CD8-positive, alpha-beta T cell (primary cell): ENCODE measurements at regions of chr22 and their contacts with region 1.

Region 1: DNA sequence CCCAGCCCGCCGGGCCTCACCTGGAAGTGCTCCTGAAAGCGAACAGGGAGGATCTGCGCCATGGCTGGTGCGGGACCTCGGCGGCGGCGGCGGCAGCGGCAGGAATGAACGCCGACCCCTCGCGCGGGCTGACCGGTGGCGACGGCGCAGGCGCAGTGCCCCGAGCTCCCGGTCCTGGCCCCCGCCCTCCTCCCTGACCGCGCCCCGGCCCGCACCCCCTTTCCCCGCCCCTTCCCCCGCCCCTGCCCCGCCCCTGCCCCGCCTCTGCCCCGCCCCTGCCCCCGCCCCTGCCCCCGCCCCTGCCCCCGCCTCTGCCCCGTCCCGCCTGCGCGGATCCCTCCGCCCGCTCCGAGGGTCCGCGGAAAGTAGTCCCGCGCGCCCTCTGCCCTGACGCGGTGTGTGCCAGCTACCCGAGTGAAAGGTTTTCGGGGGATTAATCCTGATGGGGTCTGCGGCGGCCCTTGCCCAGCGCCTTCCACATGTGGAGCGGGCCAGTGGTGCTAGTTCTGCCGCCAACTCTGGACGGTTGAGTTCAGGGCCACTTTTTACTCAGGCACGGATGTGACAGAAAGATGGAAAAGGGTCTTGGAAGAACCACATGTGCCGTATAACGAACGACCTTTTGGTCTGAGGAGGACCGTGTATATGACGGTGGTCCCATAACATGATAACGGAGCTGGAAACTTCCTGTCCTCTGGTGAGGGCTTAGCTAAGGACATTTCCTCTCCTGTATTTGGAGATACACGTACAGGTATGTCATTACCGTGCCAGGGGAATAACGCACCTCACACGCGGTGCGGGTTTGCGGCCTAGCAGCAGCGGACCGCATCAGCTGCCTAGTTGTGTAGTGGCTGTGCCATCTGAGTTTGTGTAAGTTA is at the start of gene CLTCL1:
- DNase-seq: peak; percentile 40 to 83 (median 67)
- ATAC-seq: peak; percentile 81
- H3K4me3 ChIP-seq: peak within 1 kb of the TSS; percentile 82 to 92
- H3K4me3 Mint-ChIP-seq: peak within 1 kb of the TSS; percentile 93
- H3K27ac ChIP-seq: peak within 1 kb of the TSS; percentile 38 to 55
- H3K27ac Mint-ChIP-seq: peak within 1 kb of the TSS; percentile 23
- H3K4me1 ChIP-seq: peaks cover 18% of the 10 kb centered on the region
- H3K4me1 Mint-ChIP-seq: peaks cover 24% of the 10 kb centered on the region
- H3K27me3 ChIP-seq: no peaks in the 10 kb centered on the region
- H3K27me3 Mint-ChIP-seq: peaks cover 21% of the 10 kb centered on the region
- CTCF ChIP-seq: no peak
- total RNA-seq, gene CLTCL1: 0.43 to 0.69 TPM

Region 2: GRCh38 chr22:19178656-19179496 is 112.9 kb before region 1 on chr22 and contains the start of gene SLC25A1:
- CTCF ChIA-PET with region 1: no interaction called
- POLR2A ChIA-PET with region 1: no interaction called
- intact Hi-C with region 1: loop called (anchors 1 kb)
- DNase-seq: peak in 8 of 9 experiments; percentile 54 to 87 (median 78)
- ATAC-seq: peak; percentile 67
- H3K4me3 ChIP-seq: peak within 1 kb of the TSS; percentile 68 to 74
- H3K4me3 Mint-ChIP-seq: peak within 1 kb of the TSS; percentile 84
- H3K27ac ChIP-seq: peak within 1 kb of the TSS; percentile 42 to 65
- H3K27ac Mint-ChIP-seq: peak within 1 kb of the TSS; percentile 84
- H3K4me1 ChIP-seq: peaks cover 24% of the 10 kb centered on the region
- H3K4me1 Mint-ChIP-seq: peaks cover 22% of the 10 kb centered on the region
- H3K27me3 ChIP-seq: no peaks in the 10 kb centered on the region
- H3K27me3 Mint-ChIP-seq: no peaks in the 10 kb centered on the region
- CTCF ChIP-seq: no peak
- total RNA-seq, gene SLC25A1: 14.5 to 15.9 TPM

Region 3: DNA sequence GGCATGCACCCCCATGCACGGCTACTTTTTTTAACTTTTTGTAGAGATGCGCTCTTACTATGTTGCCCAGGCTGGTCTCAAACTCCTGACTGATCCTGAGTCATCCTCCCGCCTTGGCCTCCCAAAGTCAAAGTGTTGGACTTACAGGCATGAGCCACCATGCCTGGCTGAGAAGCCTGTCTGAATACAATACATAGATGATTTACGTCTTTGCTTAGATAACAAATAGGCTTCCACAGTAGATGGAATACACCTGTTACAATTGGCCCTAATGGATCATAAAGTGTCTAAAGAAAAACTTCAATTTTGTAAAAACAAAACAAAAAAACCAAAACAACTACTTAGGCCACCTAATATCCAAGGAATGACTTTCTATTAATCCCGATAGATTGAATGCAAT is 12.7 kb after region 1 on chr22:
- CTCF ChIA-PET with region 1: no interaction called
- POLR2A ChIA-PET with region 1: no interaction called
- intact Hi-C with region 1: no loop called
- DNase-seq: no peak
- ATAC-seq: no peak
- H3K4me3 ChIP-seq: no peak overlapping the region
- H3K4me3 Mint-ChIP-seq: no peak overlapping the region
- H3K27ac ChIP-seq: no peak overlapping the region
- H3K27ac Mint-ChIP-seq: no peak overlapping the region
- H3K4me1 ChIP-seq: no peaks in the 10 kb centered on the region
- H3K4me1 Mint-ChIP-seq: no peaks in the 10 kb centered on the region
- H3K27me3 ChIP-seq: no peaks in the 10 kb centered on the region
- H3K27me3 Mint-ChIP-seq: peaks cover 6% of the 10 kb centered on the region
- CTCF ChIP-seq: no peak

Region 4: DNA sequence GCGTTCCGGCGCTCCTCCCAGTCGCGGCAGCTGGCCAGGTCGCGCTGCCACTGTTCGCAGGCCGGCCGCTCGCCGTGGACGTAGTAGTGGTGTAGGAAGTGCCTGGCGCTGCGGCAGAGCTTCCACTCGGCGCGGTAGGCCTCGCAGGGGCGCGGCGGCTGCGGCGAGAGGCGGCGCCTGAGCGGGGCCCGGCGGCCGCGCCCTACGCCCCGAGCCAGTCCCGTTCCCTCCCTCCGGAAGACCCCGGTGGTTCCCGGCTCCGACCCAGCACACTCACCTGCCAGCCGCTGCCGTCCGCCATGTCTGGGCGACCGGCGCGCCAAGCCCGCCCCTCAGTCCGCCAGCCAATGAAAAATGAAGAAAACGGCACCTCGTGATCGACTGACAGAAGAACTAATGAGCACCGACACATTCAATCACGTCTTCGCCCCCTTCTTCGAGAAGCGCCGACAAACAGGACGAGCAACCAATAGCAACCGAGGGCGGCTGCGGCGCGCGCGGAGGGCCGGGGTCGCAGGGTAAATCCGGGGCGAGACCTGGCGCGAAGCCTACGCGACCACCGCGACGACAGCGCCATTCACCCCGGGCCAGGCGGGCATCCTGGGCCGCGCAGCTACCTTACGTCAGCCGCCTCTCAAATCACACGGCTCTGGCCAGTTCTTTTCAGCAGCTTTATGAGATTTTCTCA is 155.7 kb after region 1 on chr22 and contains the start of gene C22orf39:
- CTCF ChIA-PET with region 1: no interaction called
- POLR2A ChIA-PET with region 1: interaction called, 3 read pairs
- intact Hi-C with region 1: loop called in 1 of 2 experiments (anchors 10 kb)
- DNase-seq: peak; percentile 72 to 95 (median 87)
- ATAC-seq: peak; percentile 90
- H3K4me3 ChIP-seq: peak within 1 kb of the TSS; percentile 78 to 93
- H3K4me3 Mint-ChIP-seq: peak within 1 kb of the TSS; percentile 92
- H3K27ac ChIP-seq: peak within 1 kb of the TSS; percentile 85 to 92
- H3K27ac Mint-ChIP-seq: peak within 1 kb of the TSS; percentile 93
- H3K4me1 ChIP-seq: peaks cover 27% of the 10 kb centered on the region
- H3K4me1 Mint-ChIP-seq: peaks cover 42% of the 10 kb centered on the region
- H3K27me3 ChIP-seq: no peaks in the 10 kb centered on the region
- H3K27me3 Mint-ChIP-seq: no peaks in the 10 kb centered on the region
- CTCF ChIP-seq: no peak
- total RNA-seq, gene C22orf39: 31.0 to 34.1 TPM